ENCODE measurements at regions of chr18 and their contacts with region 1.

Region 1: GRCh38 chr18:21548637-21549036 is 51.9 kb downstream of the ESCO1 start:
- DNase-seq: no peak
- H3K4me3 Mint-ChIP-seq: no peak overlapping the region
- H3K27ac Mint-ChIP-seq: no peak overlapping the region
- H3K4me1 Mint-ChIP-seq: peaks cover 11% of the 10 kb centered on the region
- H3K27me3 Mint-ChIP-seq: no peaks in the 10 kb centered on the region

Region 2: GRCh38 chr18:20975077-20975476 is 573.6 kb before region 1 on chr18:
- intact Hi-C with region 1: no loop called
- DNase-seq: no peak
- H3K4me3 Mint-ChIP-seq: no peak overlapping the region
- H3K27ac Mint-ChIP-seq: no peak overlapping the region
- H3K4me1 Mint-ChIP-seq: peaks cover 5% of the 10 kb centered on the region
- H3K27me3 Mint-ChIP-seq: no peaks in the 10 kb centered on the region

Region 3: DNA sequence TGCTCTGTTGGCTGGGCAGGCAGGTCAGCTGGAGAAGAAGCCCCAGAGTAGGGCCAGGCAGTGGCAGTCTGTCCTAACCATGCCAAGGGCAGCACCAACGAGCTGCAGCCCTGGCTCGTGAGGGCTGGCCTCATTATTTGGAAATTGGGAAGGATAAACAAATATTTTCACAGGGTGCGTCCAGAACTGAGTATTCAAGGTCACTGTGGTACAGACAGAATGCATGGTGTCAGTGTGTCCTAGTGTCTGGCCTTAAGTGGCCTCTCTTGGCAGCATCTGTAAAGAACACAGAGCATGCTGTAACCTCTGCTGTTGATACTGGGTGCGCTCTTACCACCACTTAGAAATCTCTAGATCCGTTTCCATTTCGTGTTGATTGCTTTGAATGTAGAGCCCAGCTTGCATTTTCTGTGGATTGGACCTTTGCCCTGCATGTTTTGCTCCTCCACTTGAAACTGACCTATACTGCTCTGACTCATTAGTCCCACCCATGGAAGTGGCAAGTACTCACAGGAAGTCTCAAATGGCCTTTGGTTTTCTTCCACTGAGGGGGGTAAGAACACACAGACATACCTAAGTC is 218.4 kb before region 1 on chr18:
- intact Hi-C with region 1: no loop called
- DNase-seq: no peak
- H3K4me3 Mint-ChIP-seq: no peak overlapping the region
- H3K27ac Mint-ChIP-seq: no peak overlapping the region
- H3K4me1 Mint-ChIP-seq: no peaks in the 10 kb centered on the region
- H3K27me3 Mint-ChIP-seq: peaks cover 2% of the 10 kb centered on the region

Region 4: DNA sequence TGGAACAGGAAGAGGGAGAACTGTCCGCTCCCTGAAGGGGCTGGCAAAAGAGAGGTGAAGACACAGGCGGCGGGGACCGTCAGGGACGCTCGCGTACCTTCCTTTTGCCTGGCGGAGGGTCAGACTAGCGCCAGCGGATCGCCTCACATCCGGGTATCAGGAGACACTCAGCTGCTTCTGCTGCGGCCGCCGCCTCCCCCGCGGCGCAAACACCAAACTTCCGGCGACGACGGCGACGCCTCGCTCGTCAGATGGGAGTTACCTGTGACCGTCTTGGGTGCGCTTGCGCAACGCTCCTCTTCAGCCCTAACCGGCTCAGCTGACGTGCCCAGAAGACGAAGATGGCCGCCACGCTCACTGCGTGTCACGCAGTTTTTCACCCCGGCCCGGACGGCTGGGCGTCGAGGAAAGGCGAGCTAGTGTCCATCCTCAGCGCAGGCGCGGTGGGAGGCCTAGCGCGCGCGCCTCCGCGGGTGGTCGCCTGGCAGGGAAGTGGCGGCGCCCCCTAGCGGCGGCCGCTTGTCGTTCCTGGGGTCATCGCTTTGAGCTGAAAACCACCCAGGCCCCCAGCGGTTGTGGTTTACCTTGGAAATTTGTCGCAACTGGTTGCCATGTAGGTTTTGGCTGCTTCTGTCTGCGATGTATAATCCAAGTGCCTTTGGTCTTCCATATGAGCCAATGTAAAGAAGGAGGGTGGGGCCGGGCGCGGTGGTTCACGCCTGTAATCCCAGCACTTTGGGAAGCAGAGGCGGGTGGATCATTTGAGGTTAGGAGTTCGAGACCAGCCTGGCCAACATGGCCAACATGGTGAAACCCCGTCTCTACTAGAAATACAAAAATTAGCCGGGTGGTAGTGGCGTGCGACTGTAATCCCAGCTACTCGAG is 52.1 kb after region 1 on chr18 and contains the start of gene ESCO1:
- intact Hi-C with region 1: no loop called
- DNase-seq: peak; percentile 94
- H3K4me3 Mint-ChIP-seq: peak within 1 kb of the TSS; percentile 94
- H3K27ac Mint-ChIP-seq: peak within 1 kb of the TSS; percentile 99
- H3K4me1 Mint-ChIP-seq: peaks cover 20% of the 10 kb centered on the region
- H3K27me3 Mint-ChIP-seq: no peaks in the 10 kb centered on the region
- total RNA-seq, gene ESCO1: 20.7 and 21.5 TPM in 2 replicates

Region 5: GRCh38 chr18:22102953-22103646 is 554.5 kb after region 1 on chr18:
- intact Hi-C with region 1: loop called (anchors 5 kb)
- DNase-seq: no peak
- H3K4me3 Mint-ChIP-seq: no peak overlapping the region
- H3K27ac Mint-ChIP-seq: no peak overlapping the region
- H3K4me1 Mint-ChIP-seq: no peaks in the 10 kb centered on the region
- H3K27me3 Mint-ChIP-seq: no peaks in the 10 kb centered on the region